SK-N-SH (cell line): ENCODE measurements at regions of chr3 and their contacts with region 1.

Region 1: GRCh38 chr3:172726382-172726781 is 15.5 kb upstream of the NCEH1 start:
- DNase-seq: no peak
- H3K4me3 ChIP-seq: no peak overlapping the region
- H3K27ac ChIP-seq: no peak overlapping the region
- H3K4me1 ChIP-seq: no peaks in the 10 kb centered on the region
- H3K27me3 ChIP-seq: no peaks in the 10 kb centered on the region
- CTCF ChIP-seq: no peak
- EP300 ChIP-seq: no peak
- RAD21 ChIP-seq: no peak

Region 2: GRCh38 chr3:172522871-172523818 is 203.2 kb before region 1 on chr3 and contains the start of gene TNFSF10:
- CTCF ChIA-PET with region 1: no interaction called
- POLR2A ChIA-PET with region 1: no interaction called
- DNase-seq: no peak
- H3K4me3 ChIP-seq: no peak within 1 kb of the TSS
- H3K27ac ChIP-seq: no peak within 1 kb of the TSS
- H3K4me1 ChIP-seq: no peaks in the 10 kb centered on the region; a peak in 1 of 4 replicates
- H3K27me3 ChIP-seq: no peaks in the 10 kb centered on the region
- CTCF ChIP-seq: no peak
- EP300 ChIP-seq: no peak
- RAD21 ChIP-seq: no peak
- polyA plus RNA-seq, gene TNFSF10: 0.03 and 0.10 TPM in 2 replicates

Region 3: GRCh38 chr3:172710664-172711453 is 15.5 kb before region 1 on chr3 and contains the start of gene NCEH1:
- CTCF ChIA-PET with region 1: interaction called, 18 read pairs
- POLR2A ChIA-PET with region 1: no interaction called
- DNase-seq: peak; percentile 85
- H3K4me3 ChIP-seq: peak within 1 kb of the TSS; percentile 91 to 93
- H3K27ac ChIP-seq: peak within 1 kb of the TSS; percentile 85 to 96
- H3K4me1 ChIP-seq: peaks cover 0 to 7% of the 10 kb centered on the region in 2 experiments; a peak in 2 of 4 replicates
- H3K27me3 ChIP-seq: no peaks in the 10 kb centered on the region
- CTCF ChIP-seq: peak; percentile 79
- EP300 ChIP-seq: peak in 1 of 2 experiments; percentile 50; a peak in 1 of 4 replicates
- RAD21 ChIP-seq: peak; percentile 75
- polyA plus RNA-seq, gene NCEH1: 7.5 and 12.2 TPM in 2 replicates

Region 4: GRCh38 chr3:172918165-172918564 is 191.8 kb after region 1 on chr3:
- CTCF ChIA-PET with region 1: no interaction called
- POLR2A ChIA-PET with region 1: no interaction called
- DNase-seq: no peak
- H3K4me3 ChIP-seq: no peak overlapping the region
- H3K27ac ChIP-seq: no peak overlapping the region
- H3K4me1 ChIP-seq: peaks cover 6 to 9% of the 10 kb centered on the region in 2 experiments; a peak in 3 of 4 replicates
- H3K27me3 ChIP-seq: no peaks in the 10 kb centered on the region; the same call in 1 of the 2 replicates
- CTCF ChIP-seq: no peak
- EP300 ChIP-seq: no peak
- RAD21 ChIP-seq: no peak